GM10248 (cell line): ENCODE measurements at regions of chr6 and their contacts with region 1.

Region 1: DNA sequence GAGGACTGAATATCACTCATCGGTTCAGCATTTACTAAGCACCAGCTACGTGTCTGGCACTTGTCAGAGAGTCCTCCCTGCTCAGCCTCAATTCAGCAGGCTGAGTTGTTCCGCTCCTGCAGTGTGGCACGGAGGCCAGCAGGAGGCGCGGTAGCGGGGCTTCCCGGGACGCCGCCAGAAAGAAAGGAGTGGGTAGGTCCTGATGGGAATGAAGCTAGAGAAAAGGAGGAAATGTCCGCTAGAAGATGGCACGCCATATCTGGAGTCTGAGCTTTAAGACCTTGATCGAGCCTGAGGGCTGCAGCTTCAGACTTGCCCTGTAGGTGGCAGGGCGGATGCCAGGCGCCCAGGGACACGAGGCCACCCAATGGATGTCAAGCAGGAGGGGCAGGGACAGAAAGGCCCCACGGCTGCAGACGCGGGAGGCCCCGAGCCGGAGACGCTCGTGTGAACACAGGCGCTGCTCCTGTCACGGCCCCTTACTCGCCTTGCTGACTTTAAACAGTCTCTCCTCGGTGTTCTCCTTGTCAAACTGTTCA is 18.7 kb downstream of the SERPINB6 start:
- DNase-seq: peak; percentile 50
- CTCF ChIP-seq: peak; percentile 62

Region 2: GRCh38 chr6:2940010-2940850 is 12.4 kb before region 1 on chr6:
- CTCF ChIA-PET with region 1: interaction called, 72 read pairs
- POLR2A ChIA-PET with region 1: interaction called, 5 read pairs
- DNase-seq: peak; percentile 85
- CTCF ChIP-seq: no peak

Region 3: DNA sequence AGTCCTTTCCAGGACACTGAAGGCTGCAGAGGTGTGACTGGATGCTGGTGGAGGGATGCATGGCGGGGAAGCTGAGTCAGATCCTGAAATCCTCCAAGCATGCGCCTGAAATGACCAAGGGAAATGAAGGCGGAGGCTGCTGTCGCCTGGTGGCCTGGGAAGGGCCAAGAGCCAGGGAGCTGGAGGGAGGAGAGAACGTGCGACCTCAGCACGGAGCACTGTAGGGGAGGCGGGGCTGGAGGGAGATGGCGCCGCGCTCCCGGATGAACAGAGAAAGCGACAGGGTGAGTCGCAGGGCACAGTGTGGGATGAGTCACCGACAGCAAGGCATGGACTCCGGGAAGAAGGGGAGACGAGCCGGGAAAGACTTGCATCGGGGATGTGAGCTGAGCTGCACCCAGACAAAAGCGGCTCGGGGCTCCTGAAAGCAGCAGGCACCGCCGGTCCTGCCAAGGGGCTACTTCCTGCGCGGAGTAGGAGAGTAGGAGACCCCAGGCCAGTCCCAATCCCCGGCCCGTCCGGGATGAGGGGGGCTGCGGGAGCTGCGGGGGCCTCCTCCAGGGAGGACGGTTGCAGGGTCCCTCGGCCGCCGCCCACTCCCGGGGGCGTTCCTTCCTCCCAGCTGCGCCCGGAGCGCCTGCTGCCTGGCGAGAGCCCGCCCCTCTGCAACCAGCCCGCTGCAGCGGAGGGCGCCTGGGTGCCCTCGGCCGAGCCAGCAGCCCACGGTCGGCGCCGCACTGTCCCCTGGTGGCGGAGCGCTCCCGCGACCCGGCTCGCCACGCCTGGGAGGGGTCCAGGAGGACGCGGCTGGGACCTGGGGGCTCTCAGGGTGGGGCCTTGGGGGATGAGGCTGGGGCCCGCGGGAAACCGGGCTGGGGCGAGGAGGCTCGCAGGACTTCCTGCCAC is 36.1 kb after region 1 on chr6:
- CTCF ChIA-PET with region 1: interaction called, 38 read pairs
- POLR2A ChIA-PET with region 1: no interaction called
- DNase-seq: peak; percentile 75
- CTCF ChIP-seq: peak; percentile 74